AG04449 (cell line): ENCODE measurements at regions of chr17 and their contacts with region 1.

Region 1: GRCh38 chr17:36148559-36149295 is 27.7 kb downstream of the TBC1D3B start:
- DNase-seq: peak; percentile 12
- H3K4me3 ChIP-seq: no peak overlapping the region
- CTCF ChIP-seq: peak; percentile 100

Region 2: GRCh38 chr17:35977509-35977908 is 171.2 kb before region 1 on chr17:
- CTCF ChIA-PET with region 1: interaction called, 82 read pairs
- POLR2A ChIA-PET with region 1: no interaction called
- DNase-seq: no peak
- H3K4me3 ChIP-seq: no peak overlapping the region
- CTCF ChIP-seq: no peak

Region 3: DNA sequence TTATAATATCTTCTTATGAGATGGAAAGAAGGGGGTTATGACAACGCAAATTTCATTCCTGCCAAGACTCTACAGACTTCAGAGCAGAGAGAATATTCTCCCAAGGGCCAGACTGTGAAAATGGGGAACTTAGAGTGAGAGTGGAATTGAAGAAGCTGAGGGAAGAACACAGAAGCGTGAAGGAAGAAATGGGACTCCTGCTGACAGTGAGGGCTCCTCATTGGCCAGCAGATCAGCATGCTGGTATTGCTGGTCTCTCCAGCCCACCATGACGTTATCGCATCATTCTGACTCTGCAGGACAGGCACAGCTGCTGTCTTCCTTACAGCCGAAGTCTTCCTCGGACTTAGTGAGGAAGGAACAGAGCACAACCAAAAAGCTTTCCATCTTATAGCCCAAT is 20.8 kb before region 1 on chr17:
- CTCF ChIA-PET with region 1: interaction called, 79 read pairs
- POLR2A ChIA-PET with region 1: no interaction called
- DNase-seq: no peak
- H3K4me3 ChIP-seq: no peak overlapping the region
- CTCF ChIP-seq: no peak

Region 4: DNA sequence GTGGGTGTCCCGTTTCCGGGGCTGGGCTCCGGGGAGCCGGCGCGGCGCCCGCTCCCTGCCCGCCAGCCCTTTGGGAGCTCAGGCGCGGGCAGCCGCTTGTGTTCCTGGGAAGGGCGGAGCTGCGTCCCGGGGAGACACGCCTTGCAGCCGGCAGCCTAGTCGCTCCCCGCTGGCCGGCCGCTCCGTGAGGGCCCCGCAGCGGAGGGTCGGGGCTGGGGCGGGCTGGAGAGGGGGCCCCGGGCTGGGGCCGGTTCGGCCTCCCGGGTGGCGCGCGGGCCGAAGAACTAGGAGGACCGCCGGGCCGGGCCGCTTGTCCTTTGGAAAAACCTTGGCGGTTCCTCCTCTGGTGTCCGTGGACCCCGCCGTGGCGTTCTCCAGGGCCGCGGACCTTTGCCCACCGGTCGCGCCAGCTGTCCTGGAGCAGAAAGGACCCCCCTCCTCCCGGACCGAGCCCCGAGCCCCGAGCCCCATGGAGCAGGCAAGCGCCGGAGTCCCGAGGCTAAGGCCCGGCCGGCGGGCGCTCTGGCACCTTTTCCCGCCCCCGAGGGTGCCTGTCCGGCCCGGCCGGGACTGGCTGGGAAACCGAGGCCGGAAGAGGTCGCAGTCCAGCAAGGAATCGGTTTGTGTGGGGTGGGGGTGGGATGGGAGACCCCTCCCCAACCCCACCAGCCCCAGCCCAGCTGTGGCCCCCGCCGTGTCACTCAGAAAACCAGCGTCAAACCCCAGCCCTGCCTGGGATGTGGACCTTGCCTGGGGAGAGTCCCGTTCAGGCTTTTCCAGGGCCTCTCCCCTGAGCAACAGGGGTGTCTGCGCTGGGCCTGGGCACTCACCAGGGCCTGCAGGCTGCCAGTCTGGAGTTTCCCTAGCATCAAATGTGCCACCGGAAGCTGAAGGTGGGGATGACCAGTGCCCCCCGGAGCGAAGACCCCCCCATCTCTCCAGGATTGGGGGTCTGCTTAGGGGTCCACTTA is 34.6 kb after region 1 on chr17:
- CTCF ChIA-PET with region 1: interaction called, 46 read pairs
- POLR2A ChIA-PET with region 1: no interaction called
- DNase-seq: peak; percentile 23
- H3K4me3 ChIP-seq: peak overlapping the region; percentile 74
- CTCF ChIP-seq: no peak